Calu3 (cell line): ENCODE measurements at regions of chr17 and their contacts with region 1.

Region 1: DNA sequence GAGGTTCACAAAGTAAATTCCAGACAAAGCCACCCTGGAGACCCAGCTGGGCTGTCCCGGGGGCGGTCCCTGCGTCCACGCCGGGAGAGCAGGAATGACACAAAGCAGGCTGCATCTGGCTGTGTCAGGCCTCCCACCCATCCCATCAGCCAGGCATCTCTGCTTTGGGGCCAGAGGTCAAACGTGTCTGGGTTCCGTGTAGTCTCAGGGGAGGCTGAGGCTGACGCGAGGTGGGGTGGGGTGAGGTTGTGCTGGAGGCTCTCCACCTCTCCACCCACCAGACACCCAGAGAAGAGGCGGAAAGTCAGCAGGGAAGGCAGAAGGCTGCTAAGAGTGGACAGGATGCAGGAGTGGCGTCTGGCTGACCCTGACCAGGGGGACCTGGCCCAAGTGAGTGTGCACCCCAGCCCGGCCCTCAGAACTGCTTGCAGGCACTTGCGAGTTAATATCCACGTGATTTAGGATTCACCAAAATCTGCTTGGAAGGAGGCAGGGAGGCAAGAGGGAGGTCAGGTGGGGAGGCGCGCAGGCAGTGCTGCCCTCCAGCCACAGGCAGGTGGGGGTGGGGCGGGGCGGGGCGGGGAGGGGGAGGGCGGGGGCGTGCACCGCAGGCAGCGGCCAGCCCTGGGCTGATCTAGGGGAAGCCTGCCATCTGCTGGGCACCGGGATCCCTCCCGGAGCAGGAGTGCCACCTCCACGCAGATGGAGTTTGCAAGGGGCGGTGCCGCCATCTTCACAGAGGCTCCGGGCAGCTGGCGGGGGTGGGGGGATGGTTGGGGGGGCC is 44.3 kb downstream of the TBC1D16 start:
- DNase-seq: peak; percentile 94
- H3K4me3 Mint-ChIP-seq: peak overlapping the region; percentile 65
- H3K27ac Mint-ChIP-seq: peak overlapping the region; percentile 83
- H3K4me1 Mint-ChIP-seq: peaks cover 62% of the 10 kb centered on the region
- H3K27me3 Mint-ChIP-seq: no peaks in the 10 kb centered on the region
- CTCF ChIP-seq: peak; percentile 77

Region 2: DNA sequence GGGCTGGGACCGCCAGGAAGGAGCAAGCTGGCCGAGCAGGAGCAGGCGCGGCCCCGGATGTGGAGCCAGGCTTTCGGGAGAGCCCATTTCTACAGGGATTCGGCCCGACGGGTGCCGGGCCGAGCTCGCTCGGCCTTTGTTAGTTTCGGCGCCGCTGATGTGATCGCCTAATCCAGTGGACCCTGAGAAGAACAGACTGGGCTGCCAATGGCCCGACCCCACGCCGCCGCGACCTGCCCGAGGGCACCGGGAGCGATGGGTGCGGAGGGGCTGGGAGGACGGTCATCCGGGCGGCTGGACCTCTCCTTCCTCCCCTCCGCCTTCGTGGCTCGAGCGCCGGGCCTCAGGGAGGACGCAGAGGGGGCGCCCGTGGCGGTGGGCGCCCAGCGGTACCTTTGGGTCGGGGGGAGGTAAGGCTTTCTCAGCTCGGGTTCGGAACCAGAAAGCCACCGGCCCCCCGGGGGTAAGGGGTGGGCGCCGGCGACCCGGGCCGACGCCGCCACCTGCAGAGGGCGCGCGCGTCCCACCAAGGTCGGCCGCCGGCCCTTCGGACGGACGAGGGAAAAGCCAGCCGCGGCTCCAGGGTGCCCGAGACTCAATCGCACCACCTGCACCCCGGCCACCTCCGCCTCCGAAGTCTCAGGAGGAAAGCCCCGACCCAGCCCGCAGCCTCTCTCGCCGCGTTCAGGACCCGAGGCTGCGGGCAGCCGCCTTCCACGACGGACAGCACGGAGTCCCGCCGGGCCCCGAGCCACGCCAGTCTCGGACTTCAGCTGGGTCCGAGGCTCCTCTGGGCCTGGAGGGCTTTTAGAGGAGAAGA is 201.6 kb before region 1 on chr17:
- CTCF ChIA-PET with region 1: no interaction called
- intact Hi-C with region 1: loop called (anchors 5 kb)
- DNase-seq: peak; percentile 75
- H3K4me3 Mint-ChIP-seq: peak overlapping the region; percentile 66
- H3K27ac Mint-ChIP-seq: no peak overlapping the region
- H3K4me1 Mint-ChIP-seq: no peaks in the 10 kb centered on the region
- H3K27me3 Mint-ChIP-seq: peaks cover 29% of the 10 kb centered on the region
- CTCF ChIP-seq: peak; percentile 91

Region 3: DNA sequence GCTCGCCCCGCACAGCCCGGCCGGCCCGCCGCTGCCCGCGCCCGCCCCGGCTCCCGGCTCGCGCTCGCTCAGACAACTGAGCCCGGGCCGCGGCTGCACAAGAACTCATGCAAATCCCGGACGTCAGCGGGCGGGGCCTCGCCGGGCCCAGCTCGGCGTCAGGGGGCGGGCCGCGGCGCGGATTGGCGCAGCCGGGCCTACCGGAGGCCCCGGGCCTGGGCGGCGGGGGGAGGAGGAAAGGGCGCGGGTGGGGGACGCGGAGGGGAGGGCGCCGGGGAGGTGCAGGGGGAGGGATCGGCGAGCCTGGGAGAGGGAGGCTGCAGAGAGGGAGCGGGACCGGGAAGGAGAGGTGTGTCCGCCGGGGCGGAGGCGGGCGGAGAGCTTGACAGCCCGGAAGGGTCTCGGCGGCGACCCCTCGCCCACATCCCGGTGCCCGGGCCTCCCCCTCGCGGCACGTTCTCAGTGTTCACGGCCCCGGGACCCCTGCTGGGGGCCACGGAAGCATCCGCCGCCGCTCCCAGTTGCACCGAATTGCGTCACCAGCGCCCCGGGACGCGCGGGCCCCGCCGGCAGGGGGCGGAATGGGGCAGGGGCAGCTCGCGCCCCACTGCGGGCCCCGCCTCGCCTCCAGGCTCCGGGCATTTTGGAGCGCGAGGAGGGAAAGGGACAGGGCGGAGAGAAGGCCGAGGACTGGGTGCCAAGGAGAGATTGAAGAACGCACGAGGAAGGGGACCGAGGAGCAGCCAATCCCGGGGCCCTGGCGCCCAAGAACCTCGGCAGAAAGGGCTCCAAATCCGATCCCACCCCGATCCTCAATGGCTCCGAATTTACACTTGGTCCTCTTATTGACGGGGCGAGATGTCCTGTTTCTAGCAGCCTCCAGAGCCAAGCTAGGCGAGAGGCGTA is 151.7 kb before region 1 on chr17 and contains the start of gene CBX4:
- CTCF ChIA-PET with region 1: interaction called, 10 read pairs
- intact Hi-C with region 1: no loop called
- DNase-seq: peak; percentile 96
- H3K4me3 Mint-ChIP-seq: peak within 1 kb of the TSS; percentile 85
- H3K27ac Mint-ChIP-seq: peak within 1 kb of the TSS; percentile 74
- H3K4me1 Mint-ChIP-seq: peaks cover 15% of the 10 kb centered on the region
- H3K27me3 Mint-ChIP-seq: peaks cover 38% of the 10 kb centered on the region
- CTCF ChIP-seq: peak; percentile 97
- total RNA-seq, gene CBX4: 40.2 and 46.8 TPM in 2 replicates

Region 4: DNA sequence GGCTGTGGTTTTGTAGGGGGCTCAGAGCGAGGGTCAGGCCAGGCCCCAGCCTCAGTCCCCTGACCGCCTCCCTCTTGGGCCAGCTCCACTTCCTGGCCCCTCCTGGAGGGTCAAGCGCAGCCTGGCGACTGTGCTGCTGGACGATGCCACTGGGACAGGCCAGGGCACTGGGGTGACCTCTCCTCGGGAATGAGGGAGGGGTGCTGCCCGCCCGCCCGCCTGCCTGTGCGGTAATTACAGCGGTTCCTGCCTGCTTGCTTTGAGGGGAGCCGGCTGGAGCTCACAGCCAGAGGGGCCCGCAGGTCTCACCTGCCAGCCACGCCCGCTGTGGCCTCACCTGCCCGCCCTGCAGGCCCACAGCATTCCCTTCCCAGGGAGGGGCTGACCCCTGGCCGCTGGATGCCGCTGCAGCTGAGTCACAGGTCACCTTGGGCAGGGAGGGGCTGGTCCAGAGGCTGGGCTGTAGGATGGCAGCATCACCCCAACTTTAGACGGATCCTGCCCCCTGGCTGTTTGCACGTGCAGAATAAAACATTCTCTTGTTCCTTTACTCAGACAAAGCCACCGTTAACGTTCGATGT is 75.4 kb before region 1 on chr17:
- CTCF ChIA-PET with region 1: interaction called, 4 read pairs
- intact Hi-C with region 1: loop called (anchors 5 kb)
- DNase-seq: peak; percentile 94
- H3K4me3 Mint-ChIP-seq: no peak overlapping the region
- H3K27ac Mint-ChIP-seq: no peak overlapping the region
- H3K4me1 Mint-ChIP-seq: peaks cover 40% of the 10 kb centered on the region
- H3K27me3 Mint-ChIP-seq: no peaks in the 10 kb centered on the region
- CTCF ChIP-seq: peak; percentile 22

Region 5: DNA sequence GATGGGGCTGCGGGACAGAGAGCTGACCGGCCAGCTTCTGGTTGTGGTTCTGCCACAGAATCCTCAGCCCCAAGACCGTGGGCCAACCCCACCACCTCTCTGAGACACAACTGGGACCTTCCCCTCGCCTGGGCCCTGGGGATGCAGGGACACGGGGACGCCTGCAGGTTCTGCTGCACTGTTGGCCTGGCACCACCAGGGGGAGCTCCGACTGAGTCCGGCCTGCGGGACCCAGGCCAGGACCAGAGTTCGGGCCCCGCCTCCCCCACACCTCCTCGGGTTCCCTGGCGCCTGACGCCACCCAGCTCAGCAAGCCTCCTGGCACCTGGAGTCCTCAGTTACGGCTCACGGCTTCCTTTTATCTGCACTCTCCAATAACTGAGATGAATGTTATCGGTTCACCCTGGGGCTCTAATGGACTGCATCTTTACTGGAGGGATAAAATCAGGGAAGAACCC is 17.1 kb after region 1 on chr17:
- CTCF ChIA-PET with region 1: interaction called, 10 read pairs
- intact Hi-C with region 1: no loop called
- DNase-seq: peak; percentile 91
- H3K4me3 Mint-ChIP-seq: no peak overlapping the region
- H3K27ac Mint-ChIP-seq: peak overlapping the region; percentile 52
- H3K4me1 Mint-ChIP-seq: peaks cover 9% of the 10 kb centered on the region
- H3K27me3 Mint-ChIP-seq: no peaks in the 10 kb centered on the region
- CTCF ChIP-seq: peak; percentile 96

Region 6: GRCh38 chr17:80035943-80036714 is 44.8 kb after region 1 on chr17 and contains the start of gene CCDC40:
- CTCF ChIA-PET with region 1: no interaction called
- intact Hi-C with region 1: no loop called
- DNase-seq: peak; percentile 91
- H3K4me3 Mint-ChIP-seq: peak within 1 kb of the TSS; percentile 81
- H3K27ac Mint-ChIP-seq: peak within 1 kb of the TSS; percentile 90
- H3K4me1 Mint-ChIP-seq: peaks cover 22% of the 10 kb centered on the region
- H3K27me3 Mint-ChIP-seq: no peaks in the 10 kb centered on the region
- CTCF ChIP-seq: no peak
- total RNA-seq, gene CCDC40: 9.9 and 13.3 TPM in 2 replicates

Region 7: DNA sequence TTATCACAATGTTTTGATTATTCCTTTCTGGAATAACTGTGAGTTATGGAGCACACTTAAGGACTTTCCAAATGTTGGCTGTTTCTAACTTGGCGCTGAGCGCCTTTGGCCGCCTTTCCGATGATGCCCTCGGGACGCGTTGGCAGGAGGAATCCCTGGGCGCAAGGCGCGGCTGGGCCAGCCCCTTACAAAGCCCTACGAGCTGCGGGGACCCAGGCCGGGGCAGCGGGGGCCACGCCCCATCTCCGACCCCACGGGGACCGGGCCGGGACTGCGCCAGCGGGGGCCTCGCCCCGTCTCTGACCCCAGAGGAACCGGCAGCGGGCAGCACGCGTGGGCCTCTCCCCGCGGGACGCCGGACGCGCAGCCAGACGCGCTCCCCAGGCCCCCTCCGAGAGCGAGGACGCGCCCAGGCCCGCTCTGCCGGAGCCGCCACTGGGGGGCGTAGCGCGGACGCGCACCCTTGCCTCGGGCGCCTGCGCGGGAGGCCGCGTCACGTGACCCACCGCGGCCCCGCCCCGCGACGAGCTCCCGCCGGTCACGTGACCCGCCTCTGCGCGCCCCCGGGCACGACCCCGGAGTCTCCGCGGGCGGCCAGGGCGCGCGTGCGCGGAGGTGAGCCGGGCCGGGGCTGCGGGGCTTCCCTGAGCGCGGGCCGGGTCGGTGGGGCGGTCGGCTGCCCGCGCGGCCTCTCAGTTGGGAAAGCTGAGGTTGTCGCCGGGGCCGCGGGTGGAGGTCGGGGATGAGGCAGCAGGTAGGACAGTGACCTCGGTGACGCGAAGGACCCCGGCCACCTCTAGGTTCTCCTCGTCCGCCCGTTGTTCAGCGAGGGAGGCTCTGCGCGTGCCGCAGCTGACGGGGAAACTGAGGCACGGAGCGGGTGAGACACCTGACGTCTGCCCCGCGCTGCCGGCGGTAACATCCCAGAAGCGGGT is 109.9 kb after region 1 on chr17 and contains the start of gene GAA:
- CTCF ChIA-PET with region 1: no interaction called
- intact Hi-C with region 1: no loop called
- DNase-seq: peak; percentile 94
- H3K4me3 Mint-ChIP-seq: peak within 1 kb of the TSS; percentile 81
- H3K27ac Mint-ChIP-seq: peak within 1 kb of the TSS; percentile 88
- H3K4me1 Mint-ChIP-seq: peaks cover 13% of the 10 kb centered on the region
- H3K27me3 Mint-ChIP-seq: peaks cover 15% of the 10 kb centered on the region
- CTCF ChIP-seq: peak; percentile 89
- total RNA-seq, gene GAA: 73.1 and 82.4 TPM in 2 replicates